ENCODE measurements at regions of chr20 and their contacts with region 1.

Region 1: GRCh38 chr20:32902456-32903420 is 44.0 kb downstream of the EFCAB8 start:
- DNase-seq: peak; percentile 80
- H3K4me3 ChIP-seq: no peak overlapping the region
- H3K27ac ChIP-seq: no peak overlapping the region
- H3K4me1 ChIP-seq: peaks cover 0 to 3% of the 10 kb centered on the region in 2 experiments; a peak in 1 of 4 replicates
- H3K27me3 ChIP-seq: no peaks in the 10 kb centered on the region
- CTCF ChIP-seq: peak; percentile 93
- EP300 ChIP-seq: no peak
- RAD21 ChIP-seq: peak; percentile 90

Region 2: GRCh38 chr20:32861446-32861845 is 41.3 kb before region 1 on chr20:
- CTCF ChIA-PET with region 1: no interaction called
- POLR2A ChIA-PET with region 1: no interaction called
- DNase-seq: no peak
- H3K4me3 ChIP-seq: no peak overlapping the region
- H3K27ac ChIP-seq: no peak overlapping the region
- H3K4me1 ChIP-seq: no peaks in the 10 kb centered on the region
- H3K27me3 ChIP-seq: no peaks in the 10 kb centered on the region
- CTCF ChIP-seq: no peak
- EP300 ChIP-seq: no peak
- RAD21 ChIP-seq: no peak

Region 3: GRCh38 chr20:32871627-32872160 is 31.0 kb before region 1 on chr20:
- CTCF ChIA-PET with region 1: no interaction called
- POLR2A ChIA-PET with region 1: no interaction called
- DNase-seq: no peak
- H3K4me3 ChIP-seq: no peak overlapping the region
- H3K27ac ChIP-seq: no peak overlapping the region
- H3K4me1 ChIP-seq: no peaks in the 10 kb centered on the region
- H3K27me3 ChIP-seq: no peaks in the 10 kb centered on the region; the same call in 1 of the 2 replicates
- CTCF ChIP-seq: no peak
- EP300 ChIP-seq: no peak
- RAD21 ChIP-seq: no peak

Region 4: GRCh38 chr20:32918296-32918695 is 15.6 kb after region 1 on chr20:
- CTCF ChIA-PET with region 1: interaction called, 10 read pairs
- POLR2A ChIA-PET with region 1: no interaction called
- DNase-seq: no peak
- H3K4me3 ChIP-seq: no peak overlapping the region
- H3K27ac ChIP-seq: no peak overlapping the region
- H3K4me1 ChIP-seq: no peaks in the 10 kb centered on the region
- H3K27me3 ChIP-seq: peaks cover 26% of the 10 kb centered on the region; the same call in 1 of the 2 replicates
- CTCF ChIP-seq: no peak
- EP300 ChIP-seq: no peak
- RAD21 ChIP-seq: no peak

Region 5: GRCh38 chr20:32945710-32946221 is 43.0 kb after region 1 on chr20:
- CTCF ChIA-PET with region 1: interaction called, 19 read pairs
- POLR2A ChIA-PET with region 1: no interaction called
- DNase-seq: peak; percentile 44
- H3K4me3 ChIP-seq: no peak overlapping the region
- H3K27ac ChIP-seq: no peak overlapping the region
- H3K4me1 ChIP-seq: no peaks in the 10 kb centered on the region
- H3K27me3 ChIP-seq: peaks cover 11% of the 10 kb centered on the region; the same call in 1 of the 2 replicates
- CTCF ChIP-seq: peak; percentile 59
- EP300 ChIP-seq: no peak
- RAD21 ChIP-seq: peak; percentile 39

Region 6: DNA sequence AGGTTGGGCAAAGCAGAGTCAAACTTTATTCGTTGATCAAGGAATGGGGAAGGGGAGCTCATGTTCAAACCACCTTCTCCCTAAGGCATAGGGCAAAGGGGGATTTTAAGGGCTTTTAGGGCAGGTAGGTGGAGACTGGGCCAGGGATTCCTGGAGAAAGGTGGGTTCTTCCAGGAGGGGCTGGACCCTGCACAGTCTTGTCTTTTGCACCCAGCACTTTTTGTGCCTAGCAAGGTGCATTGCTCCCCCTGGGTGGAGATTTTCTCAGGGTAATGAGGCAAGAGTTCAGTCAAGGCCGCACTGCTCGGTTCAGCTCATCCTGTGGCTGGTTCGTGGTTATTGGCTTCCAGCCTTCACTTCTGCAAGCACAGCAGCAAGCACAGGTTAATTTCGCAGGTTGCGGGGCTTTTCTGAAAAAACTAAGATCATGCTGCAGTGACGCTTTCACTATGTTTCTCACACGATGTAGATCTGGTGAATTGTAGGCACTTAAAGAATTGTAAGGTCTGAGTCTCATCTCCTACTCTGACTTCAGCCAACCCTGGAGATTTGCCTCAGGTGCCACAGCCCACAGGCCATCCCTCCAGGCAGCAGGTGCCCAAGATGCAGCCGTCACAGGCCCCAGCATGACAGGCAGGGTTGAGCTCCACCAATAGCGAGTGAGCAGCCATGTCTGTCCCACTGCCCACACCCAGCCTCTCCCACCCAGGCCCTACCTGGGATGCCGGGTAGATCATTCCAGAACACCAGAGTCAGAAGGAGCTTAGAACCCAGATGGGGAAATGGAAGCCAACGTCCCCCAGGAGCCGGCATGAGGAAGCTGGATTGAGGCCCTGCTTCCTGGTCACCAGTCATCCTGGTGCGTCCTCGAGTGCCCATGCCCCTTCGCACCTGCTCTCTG is 64.4 kb after region 1 on chr20:
- CTCF ChIA-PET with region 1: no interaction called
- POLR2A ChIA-PET with region 1: no interaction called
- DNase-seq: peak; percentile 8
- H3K4me3 ChIP-seq: no peak overlapping the region
- H3K27ac ChIP-seq: no peak overlapping the region
- H3K4me1 ChIP-seq: no peaks in the 10 kb centered on the region
- H3K27me3 ChIP-seq: peaks cover 32% of the 10 kb centered on the region
- CTCF ChIP-seq: no peak
- EP300 ChIP-seq: no peak
- RAD21 ChIP-seq: no peak

Region 7: DNA sequence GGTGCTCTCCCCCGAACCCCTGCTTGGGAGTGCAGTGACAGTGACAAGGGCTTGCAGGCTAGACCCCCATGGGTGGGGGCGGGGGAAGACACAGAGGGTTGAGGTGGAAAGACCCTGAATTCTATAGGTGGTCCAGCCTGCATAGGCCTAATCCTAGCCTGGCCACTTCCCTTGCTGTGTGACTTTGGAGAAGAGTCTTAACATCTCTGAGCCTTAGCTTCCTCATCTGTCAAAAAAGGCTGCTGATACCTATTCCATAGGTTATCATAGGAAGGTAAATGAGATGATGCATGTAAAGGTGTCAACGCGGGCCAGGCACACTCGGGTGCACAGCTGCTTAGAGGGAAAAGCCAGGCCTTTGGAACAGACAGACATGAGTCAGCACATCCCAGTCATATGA is 192.5 kb after region 1 on chr20:
- CTCF ChIA-PET with region 1: interaction called, 11 read pairs
- POLR2A ChIA-PET with region 1: no interaction called
- DNase-seq: no peak
- H3K4me3 ChIP-seq: no peak overlapping the region
- H3K27ac ChIP-seq: no peak overlapping the region
- H3K4me1 ChIP-seq: no peaks in the 10 kb centered on the region
- H3K27me3 ChIP-seq: peaks cover 29% of the 10 kb centered on the region; the same call in 1 of the 2 replicates
- CTCF ChIP-seq: no peak
- EP300 ChIP-seq: no peak
- RAD21 ChIP-seq: no peak

Region 8: GRCh38 chr20:33211817-33212424 is 309.2 kb after region 1 on chr20:
- CTCF ChIA-PET with region 1: interaction called, 12 read pairs
- POLR2A ChIA-PET with region 1: no interaction called
- DNase-seq: peak; percentile 56
- H3K4me3 ChIP-seq: no peak overlapping the region; a peak in 1 of 4 replicates
- H3K27ac ChIP-seq: no peak overlapping the region
- H3K4me1 ChIP-seq: no peaks in the 10 kb centered on the region; a peak in 1 of 4 replicates
- H3K27me3 ChIP-seq: 0 out of 2 replicates have a peak, but pooled peaks cover 7% of the 10 kb centered on the region
- CTCF ChIP-seq: peak; percentile 47
- EP300 ChIP-seq: no peak
- RAD21 ChIP-seq: peak; percentile 65